PC-9 (cell line): ENCODE measurements at regions of chrX and their contacts with region 1.

Region 1: GRCh38 chrX:134969726-134970125 is 21.1 kb upstream of the SMIM10 start:
- DNase-seq: no peak
- H3K4me3 ChIP-seq: no peak overlapping the region
- H3K27ac ChIP-seq: no peak overlapping the region
- H3K4me1 ChIP-seq: 0 out of 2 replicates have a peak, but pooled peaks cover 6% of the 10 kb centered on the region
- H3K27me3 ChIP-seq: no peaks in the 10 kb centered on the region
- CTCF ChIP-seq: no peak

Region 2: GRCh38 chrX:134294548-134294947 is 675.2 kb before region 1 on chrX:
- CTCF ChIA-PET with region 1: no interaction called
- POLR2A ChIA-PET with region 1: no interaction called
- intact Hi-C with region 1: no loop called
- DNase-seq: no peak
- H3K4me3 ChIP-seq: no peak overlapping the region
- H3K27ac ChIP-seq: no peak overlapping the region
- H3K4me1 ChIP-seq: no peaks in the 10 kb centered on the region
- H3K27me3 ChIP-seq: no peaks in the 10 kb centered on the region
- CTCF ChIP-seq: peak; percentile 71

Region 3: GRCh38 chrX:134836497-134836968 is 133.2 kb before region 1 on chrX:
- CTCF ChIA-PET with region 1: no interaction called
- POLR2A ChIA-PET with region 1: no interaction called
- intact Hi-C with region 1: no loop called
- DNase-seq: peak; percentile 4 to 86
- H3K4me3 ChIP-seq: no peak overlapping the region
- H3K27ac ChIP-seq: peak overlapping the region; percentile 64
- H3K4me1 ChIP-seq: peaks cover 11% of the 10 kb centered on the region; the same call in 1 of the 2 replicates
- H3K27me3 ChIP-seq: no peaks in the 10 kb centered on the region
- CTCF ChIP-seq: no peak

Region 4: DNA sequence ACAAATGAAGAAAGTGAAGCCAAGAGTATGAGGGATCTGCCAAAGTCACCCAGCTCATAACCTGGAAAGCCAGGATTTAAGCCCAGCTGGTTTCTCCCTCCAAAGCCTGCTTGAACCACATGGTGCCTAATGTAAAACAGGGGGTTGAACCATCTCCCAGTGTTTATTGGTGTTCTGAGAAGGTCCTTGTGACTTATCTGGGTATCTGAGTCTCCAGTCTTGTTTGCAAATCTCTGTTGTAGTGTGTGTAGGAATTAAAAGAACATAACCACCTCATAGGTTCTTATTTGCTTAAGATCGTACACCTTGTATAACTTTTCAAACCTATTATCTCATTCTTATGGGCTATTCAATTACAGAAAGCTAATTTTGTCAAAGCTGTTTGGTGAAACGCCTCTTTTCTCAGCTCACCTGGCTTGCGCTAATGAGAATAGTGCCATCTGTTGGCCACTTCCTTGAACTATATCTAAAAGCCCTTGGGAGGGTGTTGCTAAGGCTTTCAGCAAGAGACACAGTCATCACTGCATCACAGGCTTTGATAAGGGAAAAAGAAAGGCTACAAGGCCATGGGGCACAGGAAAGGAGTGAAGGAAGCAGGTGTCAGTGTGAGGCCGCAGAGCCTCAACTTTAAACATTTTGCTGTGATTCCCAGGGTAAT is 116.6 kb after region 1 on chrX:
- CTCF ChIA-PET with region 1: no interaction called
- POLR2A ChIA-PET with region 1: no interaction called
- intact Hi-C with region 1: loop called (anchors 1 kb)
- DNase-seq: peak; percentile 39 to 60
- H3K4me3 ChIP-seq: no peak overlapping the region
- H3K27ac ChIP-seq: no peak overlapping the region
- H3K4me1 ChIP-seq: no peaks in the 10 kb centered on the region
- H3K27me3 ChIP-seq: no peaks in the 10 kb centered on the region
- CTCF ChIP-seq: peak; percentile 78

Region 5: GRCh38 chrX:135185795-135186443 is 216.2 kb after region 1 on chrX:
- CTCF ChIA-PET with region 1: no interaction called
- POLR2A ChIA-PET with region 1: no interaction called
- intact Hi-C with region 1: loop called (anchors 2 kb)
- DNase-seq: peak; percentile 37 to 38
- H3K4me3 ChIP-seq: no peak overlapping the region
- H3K27ac ChIP-seq: no peak overlapping the region
- H3K4me1 ChIP-seq: no peaks in the 10 kb centered on the region
- H3K27me3 ChIP-seq: peaks cover 72% of the 10 kb centered on the region
- CTCF ChIP-seq: peak; percentile 71